Activated CD4-positive, alpha-beta T cell treated with anti-CD3 and anti-CD28 coated beads, Interleukin-2, amount 10 ng/mL, durations not matched to agents 24 days and 14 days (primary cell): ENCODE measurements at regions of chr3 and their contacts with region 1.

Region 1: GRCh38 chr3:67384760-67385397 is 269.5 kb downstream of the SUCLG2 start:
- DNase-seq: peak; percentile 79
- H3K4me3 Mint-ChIP-seq: no peak overlapping the region
- H3K27ac Mint-ChIP-seq: no peak overlapping the region
- H3K4me1 Mint-ChIP-seq: peaks cover 12% of the 10 kb centered on the region
- H3K27me3 Mint-ChIP-seq: no peaks in the 10 kb centered on the region

Region 2: DNA sequence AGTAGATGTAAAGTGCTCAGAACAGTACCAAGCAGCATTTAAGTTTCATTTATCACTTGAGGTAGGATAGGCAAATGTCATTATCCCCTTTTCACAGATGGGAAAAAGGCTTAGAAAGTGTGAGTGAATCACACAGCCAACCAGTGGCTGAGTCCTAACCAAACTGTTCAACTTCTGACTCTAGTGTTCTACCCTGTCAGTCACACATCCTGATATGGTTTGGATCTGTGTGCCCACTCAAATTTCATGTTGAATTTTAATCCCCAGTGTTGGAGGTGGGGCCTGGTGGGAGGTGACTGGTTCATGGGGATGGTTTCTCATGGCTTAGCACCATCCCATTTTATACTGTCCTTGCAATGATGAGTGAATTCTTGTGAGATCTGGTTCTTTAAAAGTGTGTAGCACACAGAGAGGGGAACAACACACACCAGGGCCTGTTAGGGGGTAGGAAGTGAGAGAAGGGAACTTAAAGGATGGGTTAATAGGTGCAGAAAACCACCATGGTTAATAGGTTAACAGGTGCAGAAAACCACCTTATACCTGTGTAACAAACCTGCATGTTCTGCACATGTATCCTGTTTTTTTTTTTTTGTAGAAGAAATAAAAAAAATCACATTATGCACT is 35.2 kb before region 1 on chr3:
- intact Hi-C with region 1: loop called (anchors 1 kb)
- DNase-seq: peak; percentile 68
- H3K4me3 Mint-ChIP-seq: no peak overlapping the region
- H3K27ac Mint-ChIP-seq: peak overlapping the region; percentile 2
- H3K4me1 Mint-ChIP-seq: peaks cover 10% of the 10 kb centered on the region
- H3K27me3 Mint-ChIP-seq: no peaks in the 10 kb centered on the region

Region 3: GRCh38 chr3:67402873-67403272 is 18.0 kb after region 1 on chr3:
- intact Hi-C with region 1: no loop called
- DNase-seq: peak; percentile 40
- H3K4me3 Mint-ChIP-seq: no peak overlapping the region
- H3K27ac Mint-ChIP-seq: no peak overlapping the region
- H3K4me1 Mint-ChIP-seq: peaks cover 1% of the 10 kb centered on the region
- H3K27me3 Mint-ChIP-seq: no peaks in the 10 kb centered on the region

Region 4: GRCh38 chr3:67605377-67605776 is 220.5 kb after region 1 on chr3:
- intact Hi-C with region 1: loop called (anchors 10 kb)
- DNase-seq: no peak
- H3K4me3 Mint-ChIP-seq: no peak overlapping the region
- H3K27ac Mint-ChIP-seq: peak overlapping the region; percentile 17
- H3K4me1 Mint-ChIP-seq: peaks cover 30% of the 10 kb centered on the region
- H3K27me3 Mint-ChIP-seq: no peaks in the 10 kb centered on the region

Region 5: DNA sequence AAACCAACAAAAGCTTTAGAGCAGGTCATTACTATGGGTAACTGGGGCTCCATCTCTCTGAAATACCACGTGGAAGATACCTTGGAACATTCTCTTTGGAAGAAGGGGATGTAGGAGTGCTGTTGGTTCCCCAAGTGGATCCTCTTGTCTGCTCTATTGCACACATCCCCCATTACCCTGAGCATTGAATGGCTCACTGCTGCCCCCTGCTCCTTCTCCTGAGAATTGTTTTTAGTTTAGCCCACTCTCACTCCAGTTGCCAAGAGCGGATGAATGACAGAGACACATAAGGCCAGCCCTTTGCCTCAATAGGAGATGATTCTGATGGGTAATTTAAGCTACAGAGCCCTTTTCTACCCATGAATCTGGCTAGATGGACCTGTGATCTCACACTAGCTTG is 405.2 kb after region 1 on chr3:
- intact Hi-C with region 1: loop called (anchors 1 kb)
- DNase-seq: peak; percentile 86
- H3K4me3 Mint-ChIP-seq: no peak overlapping the region
- H3K27ac Mint-ChIP-seq: no peak overlapping the region
- H3K4me1 Mint-ChIP-seq: peaks cover 2% of the 10 kb centered on the region
- H3K27me3 Mint-ChIP-seq: peaks cover 3% of the 10 kb centered on the region

Region 6: GRCh38 chr3:68057637-68058320 is 672.9 kb after region 1 on chr3:
- intact Hi-C with region 1: loop called (anchors 10 kb)
- DNase-seq: peak; percentile 92
- H3K4me3 Mint-ChIP-seq: peak overlapping the region; percentile 42
- H3K27ac Mint-ChIP-seq: peak overlapping the region; percentile 65
- H3K4me1 Mint-ChIP-seq: peaks cover 25% of the 10 kb centered on the region
- H3K27me3 Mint-ChIP-seq: no peaks in the 10 kb centered on the region

Region 7: DNA sequence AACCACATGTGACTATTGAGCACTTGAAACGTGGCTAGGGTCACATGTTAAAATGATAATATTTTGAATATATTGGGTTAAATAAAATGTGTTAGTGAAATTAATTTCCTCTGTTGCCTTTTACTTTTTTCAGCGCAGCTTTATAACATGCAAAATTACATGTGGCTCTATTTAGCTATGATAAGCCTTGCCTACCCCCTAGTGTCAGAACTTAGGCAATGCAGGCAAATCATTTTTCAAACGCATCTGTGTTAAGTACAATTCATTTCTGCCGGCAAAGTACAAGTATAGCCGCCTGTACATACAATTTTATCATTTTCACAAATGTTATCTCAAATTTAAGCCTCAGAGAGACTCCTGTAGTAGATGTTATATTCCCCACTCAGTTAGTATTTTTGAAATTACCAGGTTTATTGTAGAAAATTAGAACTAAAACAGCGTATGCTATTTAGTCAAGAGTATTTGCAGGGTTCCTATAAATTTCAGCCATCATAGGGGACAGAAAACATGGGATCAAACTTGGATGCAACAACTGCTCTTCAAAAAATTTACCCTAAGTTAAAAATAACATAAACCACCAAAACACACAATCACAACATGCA is 1491.3 kb after region 1 on chr3:
- intact Hi-C with region 1: loop called (anchors 10 kb)
- DNase-seq: peak; percentile 79
- H3K4me3 Mint-ChIP-seq: no peak overlapping the region
- H3K27ac Mint-ChIP-seq: no peak overlapping the region
- H3K4me1 Mint-ChIP-seq: no peaks in the 10 kb centered on the region
- H3K27me3 Mint-ChIP-seq: peaks cover 7% of the 10 kb centered on the region